ENCODE measurements at regions of chr17 and their contacts with region 1.

Region 1: DNA sequence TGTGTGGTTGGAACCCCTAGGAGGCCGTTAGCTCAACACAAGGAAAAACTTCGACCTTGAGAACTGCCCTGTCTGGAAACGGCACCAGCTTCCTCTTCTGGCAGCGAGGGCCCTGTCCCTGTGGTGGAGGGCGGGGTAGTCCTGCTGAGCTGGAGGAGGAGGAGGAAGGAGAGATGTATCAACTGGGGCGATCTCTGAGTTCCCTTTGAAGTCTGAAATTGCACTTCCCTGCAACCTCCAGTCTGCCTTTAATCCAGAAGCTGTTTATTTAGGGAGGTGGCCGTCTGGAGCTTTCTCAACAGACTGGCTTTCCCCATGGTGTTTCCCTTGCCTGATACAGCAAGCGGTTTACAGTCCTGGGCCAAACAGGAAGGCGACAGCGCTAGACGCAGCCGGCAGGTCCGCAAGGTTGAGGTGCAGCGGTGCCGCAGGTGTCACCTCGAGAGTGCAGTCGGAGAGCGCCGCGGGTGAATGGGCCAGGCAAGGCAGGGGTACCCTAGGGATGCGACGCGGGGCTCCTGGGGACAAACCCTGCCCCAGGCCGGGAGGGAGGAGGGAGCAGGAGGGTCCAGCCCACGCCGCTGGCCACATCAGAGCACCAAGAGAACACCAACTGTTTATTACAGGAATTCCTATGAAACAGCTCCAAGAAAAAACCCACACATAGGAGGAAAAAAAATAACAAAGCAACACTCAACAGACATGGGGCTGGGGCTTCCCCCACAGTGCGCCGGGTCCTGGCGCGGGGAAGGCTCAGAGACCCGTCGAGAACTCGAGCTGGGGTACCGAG is 11.4 kb upstream of the MRPS23 start:
- DNase-seq: peak; percentile 78 to 90
- ATAC-seq: peak; percentile 37 to 64
- H3K4me3 ChIP-seq: peak overlapping the region; percentile 40
- H3K27ac ChIP-seq: peak overlapping the region; percentile 92 to 95
- H3K4me1 ChIP-seq: peaks cover 73% of the 10 kb centered on the region
- CTCF ChIP-seq: no peak
- EP300 ChIP-seq: peak; percentile 68 to 88; a peak in 4 of 5 replicates
- POLR2A ChIP-seq: peak; percentile 24; the same call in 1 of the 2 replicates
- RAD21 ChIP-seq: peak; percentile 20 to 34; a peak in 1 of 5 replicates

Region 2: GRCh38 chr17:57916925-57917858 is 56.0 kb after region 1 on chr17:
- CTCF ChIA-PET with region 1: interaction called, 50 read pairs
- POLR2A ChIA-PET with region 1: no interaction called
- DNase-seq: peak in 1 of 2 experiments; percentile 63
- ATAC-seq: peak; percentile 25 to 53; a peak in 4 of 6 replicates
- H3K4me3 ChIP-seq: no peak overlapping the region
- H3K27ac ChIP-seq: peak overlapping the region; percentile 56 to 74
- H3K4me1 ChIP-seq: peaks cover 76% of the 10 kb centered on the region
- CTCF ChIP-seq: peak; percentile 28
- EP300 ChIP-seq: no peak
- POLR2A ChIP-seq: no peak
- RAD21 ChIP-seq: peak; percentile 35 to 55; a peak in 3 of 5 replicates

Region 3: GRCh38 chr17:57955183-57955931 is 94.2 kb after region 1 on chr17 and contains the start of gene CUEDC1:
- CTCF ChIA-PET with region 1: interaction called, 227 read pairs
- POLR2A ChIA-PET with region 1: interaction called, 29 read pairs
- DNase-seq: peak; percentile 69 to 76
- ATAC-seq: peak; percentile 69 to 79
- H3K4me3 ChIP-seq: peak within 1 kb of the TSS; percentile 92
- H3K27ac ChIP-seq: peak within 1 kb of the TSS; percentile 93 to 100
- H3K4me1 ChIP-seq: peaks cover 67% of the 10 kb centered on the region
- CTCF ChIP-seq: peak; percentile 33; the same call in 2 of the 3 replicates
- EP300 ChIP-seq: no peak
- POLR2A ChIP-seq: peak; percentile 70
- RAD21 ChIP-seq: peak; percentile 9 to 40; a peak in 2 of 5 replicates
- polyA plus RNA-seq, gene CUEDC1: 44.3 and 54.8 TPM in 2 replicates

Region 4: DNA sequence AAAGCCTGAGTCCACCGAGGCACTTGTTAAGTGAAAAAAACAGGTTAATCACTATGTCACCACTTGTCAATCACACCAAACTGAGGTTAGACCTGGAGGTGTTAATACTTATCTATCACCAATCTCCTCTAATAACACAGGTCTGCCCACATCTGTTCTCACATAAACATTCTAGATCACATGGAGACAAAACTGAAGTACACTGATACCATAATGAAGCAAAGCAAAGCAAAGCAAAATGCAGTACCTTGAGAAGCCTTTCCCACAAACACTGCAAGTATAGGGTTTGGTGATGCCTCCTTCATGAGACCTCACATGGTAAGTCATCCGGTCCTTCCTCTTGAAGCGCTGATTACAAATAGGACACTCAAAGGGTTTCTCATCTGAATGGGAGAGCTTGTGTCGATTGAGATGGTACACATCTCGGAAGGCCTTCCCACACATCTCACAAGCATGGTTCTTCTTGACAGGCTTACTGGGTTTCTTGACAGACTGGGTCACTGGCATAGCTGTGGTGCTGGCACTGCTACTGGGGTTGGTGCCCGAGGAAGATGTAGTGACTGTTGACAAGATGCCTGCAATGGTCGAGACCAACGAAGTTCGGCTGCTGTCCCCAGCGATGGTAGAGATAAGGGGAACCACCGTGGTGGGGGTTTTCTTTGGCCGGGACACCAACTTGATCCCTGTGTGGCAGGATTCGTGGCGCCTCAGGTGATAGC is 121.4 kb after region 1 on chr17:
- CTCF ChIA-PET with region 1: interaction called, 55 read pairs
- POLR2A ChIA-PET with region 1: interaction called, 17 read pairs
- DNase-seq: no peak
- ATAC-seq: no peak
- H3K4me3 ChIP-seq: no peak overlapping the region
- H3K27ac ChIP-seq: 0 out of 6 replicates have a peak overlapping the region, but pooled peaks of 1 of the 2 experiments have one; percentile 13
- H3K4me1 ChIP-seq: peaks cover 62% of the 10 kb centered on the region
- CTCF ChIP-seq: no peak
- EP300 ChIP-seq: no peak
- POLR2A ChIP-seq: no peak
- RAD21 ChIP-seq: no peak

Region 5: GRCh38 chr17:58082870-58083490 is 221.8 kb after region 1 on chr17 and contains the start of gene DYNLL2:
- CTCF ChIA-PET with region 1: interaction called, 3 read pairs
- POLR2A ChIA-PET with region 1: interaction called, 15 read pairs
- DNase-seq: peak; percentile 91 to 97
- ATAC-seq: peak; percentile 82 to 87
- H3K4me3 ChIP-seq: peak within 1 kb of the TSS; percentile 95
- H3K27ac ChIP-seq: peak within 1 kb of the TSS; percentile 88 to 90
- H3K4me1 ChIP-seq: peaks cover 18% of the 10 kb centered on the region
- CTCF ChIP-seq: no peak
- EP300 ChIP-seq: peak in 1 of 2 experiments; percentile 12; a peak in 1 of 5 replicates
- POLR2A ChIP-seq: peak; percentile 60
- RAD21 ChIP-seq: no peak
- polyA plus RNA-seq, gene DYNLL2: 19.6 TPM in 2 replicates